ENCODE measurements at regions of chr11 and their contacts with region 1.

Region 1: GRCh38 chr11:130216611-130217132 is 57.1 kb downstream of the ST14 start:
- DNase-seq: peak in 10 of 42 donors; percentile 1 to 21 (median 6)

Region 2: GRCh38 chr11:129836979-129837378 is 379.7 kb before region 1 on chr11:
- intact Hi-C with region 1: no loop called
- DNase-seq: no peak

Region 3: GRCh38 chr11:130420478-130421198 is 204.0 kb after region 1 on chr11:
- intact Hi-C with region 1: loop called (anchors 5 kb)
- DNase-seq: peak in 2 of 42 donors; percentile 36 to 46

Measured in head of caudate nucleus (tissue), 42 donors.